HCT116 (cell line): ENCODE measurements at regions of chr11 and their contacts with region 1.

Region 1: GRCh38 chr11:30143098-30143705 is 87.6 kb upstream of the FSHB start:
- DNase-seq: peak; percentile 16
- ATAC-seq: peak; percentile 67
- H3K4me3 ChIP-seq: no peak overlapping the region
- H3K27ac ChIP-seq: no peak overlapping the region
- H3K4me1 ChIP-seq: no peaks in the 10 kb centered on the region
- H3K27me3 ChIP-seq: no peaks in the 10 kb centered on the region
- CTCF ChIP-seq: peak; percentile 27 to 76 (median 56); a peak in 5 of 6 replicates
- POLR2A ChIP-seq: no peak
- RAD21 ChIP-seq: peak; percentile 44

Region 2: DNA sequence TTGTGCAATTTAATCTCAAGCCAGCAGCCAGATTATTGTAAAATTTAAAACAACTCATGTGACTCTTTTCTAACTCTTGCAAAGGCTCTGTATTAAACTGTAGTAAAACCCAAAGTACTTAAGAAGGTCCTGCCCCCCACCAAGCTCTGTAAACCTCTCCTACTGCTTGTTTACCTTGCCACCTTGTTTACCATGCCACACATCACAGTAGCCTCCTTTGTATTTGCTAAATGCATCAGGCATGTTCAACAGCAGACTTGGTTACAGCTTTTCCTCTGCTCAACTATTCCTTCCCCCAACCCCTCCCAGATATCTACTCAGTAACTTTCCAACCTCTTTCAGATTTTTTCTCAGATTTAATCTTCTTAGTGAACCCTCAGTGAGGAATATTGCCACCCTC is 1173.4 kb before region 1 on chr11:
- CTCF ChIA-PET with region 1: no interaction called
- POLR2A ChIA-PET with region 1: no interaction called
- RAD21 ChIA-PET with region 1: no interaction called
- intact Hi-C with region 1: loop called (anchors 10 kb)
- DNase-seq: no peak
- ATAC-seq: no peak
- H3K4me3 ChIP-seq: no peak overlapping the region
- H3K27ac ChIP-seq: no peak overlapping the region
- H3K4me1 ChIP-seq: no peaks in the 10 kb centered on the region
- H3K27me3 ChIP-seq: no peaks in the 10 kb centered on the region
- CTCF ChIP-seq: no peak
- POLR2A ChIP-seq: no peak
- RAD21 ChIP-seq: no peak

Region 3: DNA sequence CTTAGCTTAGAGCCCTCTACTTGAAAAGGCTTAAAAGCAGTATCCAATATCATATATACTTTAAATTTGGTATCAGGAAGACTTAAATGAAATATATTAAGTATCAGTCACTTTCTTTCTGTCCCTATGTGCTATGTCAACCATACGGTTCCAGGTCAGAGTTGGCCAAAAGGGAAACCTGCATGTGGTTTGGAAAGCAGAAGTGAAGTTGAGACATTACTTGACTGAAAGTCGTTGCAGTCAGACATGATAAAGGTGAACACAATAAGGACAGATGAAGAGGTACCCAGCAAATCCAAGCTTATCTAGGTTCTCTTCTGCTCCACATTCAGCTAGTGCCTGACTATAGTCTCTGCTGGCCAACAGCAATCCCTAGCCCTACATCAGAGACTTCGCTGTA is 463.2 kb before region 1 on chr11:
- CTCF ChIA-PET with region 1: no interaction called
- POLR2A ChIA-PET with region 1: no interaction called
- RAD21 ChIA-PET with region 1: no interaction called
- intact Hi-C with region 1: no loop called
- DNase-seq: no peak
- ATAC-seq: no peak
- H3K4me3 ChIP-seq: no peak overlapping the region
- H3K27ac ChIP-seq: no peak overlapping the region
- H3K4me1 ChIP-seq: no peaks in the 10 kb centered on the region
- H3K27me3 ChIP-seq: no peaks in the 10 kb centered on the region
- CTCF ChIP-seq: no peak
- POLR2A ChIP-seq: no peak
- RAD21 ChIP-seq: no peak

Region 4: GRCh38 chr11:30225642-30226041 is 82.4 kb after region 1 on chr11:
- CTCF ChIA-PET with region 1: no interaction called
- POLR2A ChIA-PET with region 1: no interaction called
- RAD21 ChIA-PET with region 1: no interaction called
- intact Hi-C with region 1: no loop called
- DNase-seq: no peak
- ATAC-seq: no peak
- H3K4me3 ChIP-seq: no peak overlapping the region
- H3K27ac ChIP-seq: no peak overlapping the region
- H3K4me1 ChIP-seq: no peaks in the 10 kb centered on the region
- H3K27me3 ChIP-seq: peaks cover 13% of the 10 kb centered on the region
- CTCF ChIP-seq: 0 out of 6 replicates have a peak, but pooled peaks of 1 of the 3 experiments have one; percentile 4
- POLR2A ChIP-seq: no peak
- RAD21 ChIP-seq: no peak